ENCODE measurements at regions of chr7 and their contacts with region 1.

Region 1: DNA sequence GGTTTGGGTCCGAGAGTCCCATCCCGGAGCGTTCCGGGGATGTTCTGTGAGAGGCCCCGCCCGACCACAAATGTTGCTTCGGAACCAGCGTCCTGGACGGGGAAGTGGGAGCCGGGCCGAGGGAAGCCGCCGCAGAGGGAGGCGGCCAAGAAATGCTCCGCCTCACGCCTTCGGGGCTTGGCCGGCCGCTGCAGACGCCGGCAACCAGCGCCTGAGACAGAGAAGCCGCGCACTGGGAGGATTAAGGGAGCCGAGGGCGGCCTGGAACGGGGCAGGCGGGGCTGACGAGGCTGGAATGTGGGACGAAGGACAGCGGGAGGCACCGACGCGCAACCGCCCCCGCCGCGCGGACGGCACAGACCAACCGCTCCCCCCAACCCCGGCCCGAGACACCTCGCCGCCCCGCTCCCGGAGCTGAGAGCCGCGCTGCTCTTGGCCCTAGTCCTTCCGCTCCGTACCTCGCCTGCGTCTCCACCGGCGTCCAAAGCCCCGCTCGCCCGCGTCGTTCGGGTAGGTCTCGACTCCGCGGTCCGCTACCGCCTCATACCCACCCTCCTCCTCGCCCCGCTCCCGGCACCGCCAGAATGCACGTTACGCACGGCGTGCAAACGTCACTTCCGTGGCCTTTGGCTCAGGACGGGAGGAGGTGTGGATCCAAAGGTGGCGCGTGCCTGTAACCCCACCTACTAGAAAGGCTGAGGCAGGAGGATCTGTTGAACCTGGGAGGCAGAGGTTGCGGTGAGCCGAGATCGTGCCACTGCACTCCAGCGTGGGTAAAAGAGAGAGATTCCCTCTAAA is 36.7 kb upstream of the KCTD7 start:
- DNase-seq: peak; percentile 74
- ATAC-seq: peak; percentile 99
- H3K4me3 ChIP-seq: peak overlapping the region; percentile 96 to 97
- H3K27ac ChIP-seq: peak overlapping the region; percentile 93
- H3K4me1 ChIP-seq: peaks cover 21% of the 10 kb centered on the region
- H3K27me3 ChIP-seq: no peaks in the 10 kb centered on the region
- CTCF ChIP-seq: no peak

Region 2: DNA sequence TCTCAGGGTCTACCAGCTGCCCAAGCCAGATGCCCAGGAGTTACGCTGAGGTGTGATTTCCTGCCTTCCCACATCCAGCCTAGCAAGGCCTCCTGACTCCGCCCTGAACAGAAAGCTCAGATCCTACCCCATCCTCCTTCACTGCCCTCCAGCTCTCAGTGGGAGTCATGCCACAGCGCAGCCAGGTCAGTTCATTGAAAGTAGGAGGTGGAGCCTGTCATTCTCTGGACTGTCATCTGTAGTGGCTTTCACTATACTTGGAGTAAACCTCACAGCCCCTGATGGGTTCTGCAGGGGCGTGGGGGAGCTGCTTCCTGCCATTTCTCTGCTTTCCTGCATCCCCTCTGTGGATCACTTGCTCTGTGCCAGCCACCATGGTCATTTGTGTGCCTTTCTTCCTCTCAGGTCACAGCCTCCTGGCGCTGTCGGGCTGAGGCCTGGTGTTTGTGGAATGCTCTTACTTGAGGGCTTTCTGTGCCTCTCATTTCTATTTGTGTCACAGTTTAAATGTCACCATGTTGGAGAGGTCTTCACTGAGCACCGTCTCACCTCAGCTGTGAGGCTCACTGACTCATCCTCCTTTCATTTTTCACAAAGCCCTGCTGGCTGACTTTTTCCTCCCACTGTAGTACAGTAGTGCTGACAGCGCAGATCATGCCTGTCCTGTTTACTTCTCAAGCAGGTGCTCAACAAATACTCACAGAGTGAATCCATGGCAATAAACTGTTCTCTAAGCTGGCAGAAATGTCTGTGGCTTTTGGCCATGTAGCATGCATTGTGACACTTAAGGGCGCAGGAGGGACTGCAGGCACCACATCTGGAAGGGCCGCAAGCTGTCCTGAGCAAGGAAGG is 268.0 kb after region 1 on chr7:
- CTCF ChIA-PET with region 1: no interaction called
- POLR2A ChIA-PET with region 1: interaction called, 16 read pairs
- in situ Hi-C with region 1: no loop called
- intact Hi-C with region 1: no loop called
- DNase-seq: no peak
- ATAC-seq: peak; percentile 45; the same call in 1 of the 2 replicates
- H3K4me3 ChIP-seq: no peak overlapping the region
- H3K27ac ChIP-seq: no peak overlapping the region
- H3K4me1 ChIP-seq: no peaks in the 10 kb centered on the region
- H3K27me3 ChIP-seq: no peaks in the 10 kb centered on the region
- CTCF ChIP-seq: no peak

Measured in Panc1 (cell line).